Activated CD8-positive, alpha-beta T cell treated with anti-CD3 and anti-CD28 coated beads, Interleukin-2, amount 10 ng/mL, durations not matched to agents 7 days and 5 days (primary cell): ENCODE measurements at regions of chr5 and their contacts with region 1.

Region 1: GRCh38 chr5:80083101-80083890 is 48.1 kb downstream of the THBS4 start:
- DNase-seq: peak; percentile 28
- ATAC-seq: peak; percentile 83
- H3K4me3 Mint-ChIP-seq: peak overlapping the region; percentile 54
- H3K27ac Mint-ChIP-seq: peak overlapping the region; percentile 40
- H3K4me1 Mint-ChIP-seq: peaks cover 11% of the 10 kb centered on the region
- H3K27me3 Mint-ChIP-seq: no peaks in the 10 kb centered on the region

Region 2: DNA sequence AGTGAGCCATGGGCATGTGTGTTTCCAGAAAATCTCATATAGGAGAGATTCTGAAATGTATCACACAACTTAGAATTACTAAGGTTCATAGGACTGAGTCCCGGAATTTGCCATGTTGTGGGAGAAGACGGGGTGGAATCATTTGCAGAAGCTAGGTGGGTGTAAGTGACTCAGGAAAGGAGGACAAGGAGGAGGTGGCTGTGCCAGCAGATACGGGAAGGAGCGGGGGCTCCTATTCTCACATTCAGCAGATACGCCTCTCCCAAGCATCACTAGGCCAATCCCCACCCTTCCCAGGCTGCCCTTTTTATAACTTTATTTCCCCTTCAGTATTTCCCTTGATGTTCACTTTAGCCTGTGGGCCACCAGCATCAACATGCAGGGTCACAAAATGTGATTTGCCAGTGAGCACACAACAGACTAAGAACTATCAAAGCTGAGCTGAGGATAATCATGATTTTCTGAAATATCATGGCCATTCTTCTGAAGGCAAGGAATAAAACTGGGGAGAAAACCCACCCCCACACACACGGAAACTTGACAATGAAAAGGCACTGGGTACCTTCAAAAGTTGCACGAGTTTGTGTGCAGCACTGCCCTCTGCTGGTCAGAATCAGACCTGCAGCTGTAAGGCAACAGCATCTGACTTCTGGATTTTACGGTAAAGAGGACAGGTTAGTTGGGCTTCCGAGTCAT is 225.4 kb before region 1 on chr5:
- CTCF ChIA-PET with region 1: interaction called, 12 read pairs
- POLR2A ChIA-PET with region 1: no interaction called
- DNase-seq: peak; percentile 85
- ATAC-seq: peak; percentile 60
- H3K4me3 Mint-ChIP-seq: no peak overlapping the region
- H3K27ac Mint-ChIP-seq: no peak overlapping the region
- H3K4me1 Mint-ChIP-seq: no peaks in the 10 kb centered on the region
- H3K27me3 Mint-ChIP-seq: peaks cover 31% of the 10 kb centered on the region

Region 3: GRCh38 chr5:79878721-79879336 is 204.5 kb before region 1 on chr5:
- CTCF ChIA-PET with region 1: interaction called, 31 read pairs
- POLR2A ChIA-PET with region 1: no interaction called
- DNase-seq: peak; percentile 51
- ATAC-seq: peak; percentile 49
- H3K4me3 Mint-ChIP-seq: no peak overlapping the region
- H3K27ac Mint-ChIP-seq: no peak overlapping the region
- H3K4me1 Mint-ChIP-seq: peaks cover 5% of the 10 kb centered on the region
- H3K27me3 Mint-ChIP-seq: no peaks in the 10 kb centered on the region

Region 4: DNA sequence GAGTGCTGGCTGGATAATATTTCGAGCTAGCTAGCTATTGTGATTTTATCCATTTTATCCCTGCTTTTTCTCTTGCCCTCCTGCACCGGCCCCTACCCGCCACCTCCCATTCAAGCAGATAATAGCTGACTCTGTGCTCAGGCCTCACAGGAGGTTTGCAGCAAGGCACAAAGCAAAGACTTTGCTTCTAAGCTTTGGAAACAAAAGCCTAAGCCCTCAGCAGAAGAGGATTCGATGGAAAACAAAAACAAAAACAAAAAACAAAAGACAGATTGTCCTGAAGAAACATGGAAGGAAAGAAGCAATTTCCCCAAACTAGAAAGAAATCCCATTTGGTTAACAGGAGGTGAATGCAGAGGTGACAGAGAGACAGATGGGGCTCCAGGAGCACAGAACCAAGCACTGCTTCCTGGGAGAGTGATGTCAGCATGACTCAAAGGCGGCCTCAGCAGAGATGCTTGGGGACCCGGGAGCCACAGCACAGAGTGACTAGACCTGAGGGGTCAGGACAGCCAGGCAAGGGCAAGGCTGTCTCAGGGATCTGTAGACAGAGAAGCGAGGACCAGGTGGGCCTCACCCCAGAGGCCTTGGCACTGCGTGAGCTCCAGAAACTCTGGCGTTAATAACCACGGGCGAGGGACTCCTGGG is 120.6 kb before region 1 on chr5:
- CTCF ChIA-PET with region 1: interaction called, 13 read pairs
- POLR2A ChIA-PET with region 1: no interaction called
- DNase-seq: no peak
- ATAC-seq: no peak
- H3K4me3 Mint-ChIP-seq: no peak overlapping the region
- H3K27ac Mint-ChIP-seq: no peak overlapping the region
- H3K4me1 Mint-ChIP-seq: peaks cover 2% of the 10 kb centered on the region
- H3K27me3 Mint-ChIP-seq: peaks cover 7% of the 10 kb centered on the region

Region 5: DNA sequence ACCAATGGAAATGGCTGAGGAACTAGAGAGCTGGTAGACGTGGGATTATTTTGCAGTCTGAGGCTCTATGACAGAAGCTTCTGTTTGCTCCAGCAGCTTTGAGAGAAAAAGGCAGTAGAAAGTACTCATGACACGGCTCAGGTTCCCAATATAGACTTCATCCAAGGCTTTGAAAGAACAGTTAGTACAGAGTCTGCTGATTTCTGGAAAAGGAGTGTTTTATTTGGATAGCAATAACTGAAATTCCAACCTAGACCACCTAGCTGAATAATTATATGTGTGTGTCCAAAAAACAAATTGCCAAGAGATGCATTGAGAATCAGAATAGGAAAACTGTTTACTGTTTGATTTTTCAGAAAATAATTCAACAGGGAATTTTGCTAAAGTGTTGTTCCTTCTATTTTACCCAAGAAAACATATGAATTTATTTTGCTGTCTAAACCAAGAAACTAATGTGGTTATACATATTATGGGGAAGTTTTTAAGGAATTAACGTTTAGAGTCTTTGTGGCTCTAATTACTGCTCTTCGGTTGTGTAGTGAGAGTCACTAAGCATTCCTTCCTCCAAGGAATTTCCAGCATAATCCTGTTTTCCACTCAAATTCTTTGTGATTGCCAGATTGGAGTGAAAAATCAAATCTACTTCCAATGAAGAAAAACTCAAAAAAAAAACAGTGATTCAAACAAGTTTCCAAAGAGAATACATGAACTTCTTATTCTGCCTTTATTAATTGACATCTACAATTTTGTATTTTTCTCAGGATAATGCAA is 74.1 kb before region 1 on chr5:
- CTCF ChIA-PET with region 1: interaction called, 11 read pairs
- POLR2A ChIA-PET with region 1: no interaction called
- DNase-seq: no peak
- ATAC-seq: no peak
- H3K4me3 Mint-ChIP-seq: no peak overlapping the region
- H3K27ac Mint-ChIP-seq: no peak overlapping the region
- H3K4me1 Mint-ChIP-seq: peaks cover 5% of the 10 kb centered on the region
- H3K27me3 Mint-ChIP-seq: no peaks in the 10 kb centered on the region

Region 6: DNA sequence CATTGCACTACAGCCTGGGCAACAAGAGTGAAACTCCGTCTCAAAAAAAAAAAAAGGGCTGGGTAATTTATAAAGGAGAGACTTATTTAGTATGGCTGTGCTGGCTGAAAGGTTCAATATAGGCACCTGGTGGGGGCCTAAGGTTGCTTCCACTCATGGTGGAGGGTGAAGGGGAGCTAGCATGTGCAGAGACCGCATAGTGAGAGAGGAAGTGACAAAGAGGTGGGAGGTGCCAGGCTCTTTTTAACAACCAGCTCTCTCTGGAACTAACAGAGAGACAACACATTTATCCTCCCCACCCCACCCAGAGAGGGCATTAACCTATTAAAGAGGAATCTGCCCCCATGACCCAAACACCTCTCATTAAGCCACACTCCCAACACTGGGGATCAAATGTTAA is 201.4 kb after region 1 on chr5:
- CTCF ChIA-PET with region 1: interaction called, 11 read pairs
- POLR2A ChIA-PET with region 1: no interaction called
- DNase-seq: peak; percentile 61
- ATAC-seq: peak; percentile 87
- H3K4me3 Mint-ChIP-seq: no peak overlapping the region
- H3K27ac Mint-ChIP-seq: peak overlapping the region; percentile 88
- H3K4me1 Mint-ChIP-seq: peaks cover 11% of the 10 kb centered on the region
- H3K27me3 Mint-ChIP-seq: no peaks in the 10 kb centered on the region